CD8-positive, alpha-beta T cell (primary cell): ENCODE measurements at regions of chr9 and their contacts with region 1.

Region 1: GRCh38 chr9:120755827-120756434 is 37.3 kb downstream of the FBXW2 start:
- DNase-seq: peak; percentile 46 to 82 (median 70)
- ATAC-seq: peak; percentile 79
- H3K4me3 ChIP-seq: no peak overlapping the region
- H3K4me3 Mint-ChIP-seq: no peak overlapping the region
- H3K27ac ChIP-seq: no peak overlapping the region
- H3K27ac Mint-ChIP-seq: no peak overlapping the region
- H3K4me1 ChIP-seq: no peaks in the 10 kb centered on the region
- H3K4me1 Mint-ChIP-seq: no peaks in the 10 kb centered on the region
- H3K27me3 ChIP-seq: no peaks in the 10 kb centered on the region
- H3K27me3 Mint-ChIP-seq: no peaks in the 10 kb centered on the region
- CTCF ChIP-seq: peak; percentile 93

Region 2: DNA sequence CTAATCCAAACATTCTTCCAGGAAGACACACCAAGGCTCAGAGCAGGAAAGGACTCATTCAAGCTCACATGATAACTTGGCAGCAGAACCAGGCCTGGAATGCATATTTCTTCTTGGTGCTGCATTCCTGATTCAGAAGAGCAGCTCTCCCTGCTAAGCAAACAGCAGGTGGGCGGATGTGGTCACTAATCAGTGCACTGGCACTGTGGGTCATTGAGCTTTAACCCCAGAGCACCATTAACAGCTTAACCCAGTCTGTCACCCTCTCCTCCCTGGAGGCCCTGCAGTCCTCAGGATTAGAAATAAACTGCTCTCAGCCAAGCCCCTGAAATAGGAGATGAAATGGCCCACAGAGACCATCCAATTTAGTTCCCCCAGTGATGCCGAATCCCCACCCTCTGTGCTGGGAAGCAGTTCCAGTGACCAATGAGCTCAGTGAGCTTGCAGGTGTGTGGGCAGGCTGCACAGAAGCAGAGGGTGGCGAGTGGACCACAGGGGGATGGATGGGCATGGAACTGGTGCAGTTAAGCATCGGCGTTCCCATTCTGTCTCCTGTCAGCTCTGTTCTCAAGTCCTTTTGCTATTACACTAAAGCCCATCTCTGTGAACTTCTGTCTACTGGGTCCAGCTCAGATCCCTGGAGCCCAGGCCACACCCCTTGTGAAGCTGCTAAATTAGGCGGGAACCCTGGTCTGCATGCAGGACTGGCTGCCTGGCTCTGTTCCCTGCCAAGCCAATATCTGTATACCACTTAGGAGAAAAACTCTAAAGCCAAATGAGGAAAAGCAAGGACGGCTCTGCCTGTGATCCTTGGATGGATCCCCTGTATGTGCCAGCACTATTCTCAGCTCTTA is 25.0 kb before region 1 on chr9:
- CTCF ChIA-PET with region 1: interaction called, 10 read pairs
- POLR2A ChIA-PET with region 1: no interaction called
- intact Hi-C with region 1: no loop called
- DNase-seq: no peak
- ATAC-seq: no peak
- H3K4me3 ChIP-seq: no peak overlapping the region
- H3K4me3 Mint-ChIP-seq: no peak overlapping the region
- H3K27ac ChIP-seq: no peak overlapping the region
- H3K27ac Mint-ChIP-seq: no peak overlapping the region
- H3K4me1 ChIP-seq: no peaks in the 10 kb centered on the region
- H3K4me1 Mint-ChIP-seq: peaks cover 3% of the 10 kb centered on the region
- H3K27me3 ChIP-seq: peaks cover 0 to 3% of the 10 kb centered on the region in 2 experiments
- H3K27me3 Mint-ChIP-seq: no peaks in the 10 kb centered on the region
- CTCF ChIP-seq: no peak

Region 3: GRCh38 chr9:120936011-120936763 is 180.3 kb after region 1 on chr9:
- CTCF ChIA-PET with region 1: interaction called, 10 read pairs
- POLR2A ChIA-PET with region 1: no interaction called
- intact Hi-C with region 1: loop called (anchors 1 to 2 kb)
- DNase-seq: peak; percentile 69 to 94 (median 88)
- ATAC-seq: peak; percentile 65
- H3K4me3 ChIP-seq: no peak overlapping the region
- H3K4me3 Mint-ChIP-seq: peak overlapping the region; percentile 30
- H3K27ac ChIP-seq: peak overlapping the region; percentile 52 to 95
- H3K27ac Mint-ChIP-seq: peak overlapping the region; percentile 90
- H3K4me1 ChIP-seq: peaks cover 61% of the 10 kb centered on the region
- H3K4me1 Mint-ChIP-seq: peaks cover 60% of the 10 kb centered on the region
- H3K27me3 ChIP-seq: no peaks in the 10 kb centered on the region
- H3K27me3 Mint-ChIP-seq: no peaks in the 10 kb centered on the region
- CTCF ChIP-seq: peak; percentile 84

Region 4: DNA sequence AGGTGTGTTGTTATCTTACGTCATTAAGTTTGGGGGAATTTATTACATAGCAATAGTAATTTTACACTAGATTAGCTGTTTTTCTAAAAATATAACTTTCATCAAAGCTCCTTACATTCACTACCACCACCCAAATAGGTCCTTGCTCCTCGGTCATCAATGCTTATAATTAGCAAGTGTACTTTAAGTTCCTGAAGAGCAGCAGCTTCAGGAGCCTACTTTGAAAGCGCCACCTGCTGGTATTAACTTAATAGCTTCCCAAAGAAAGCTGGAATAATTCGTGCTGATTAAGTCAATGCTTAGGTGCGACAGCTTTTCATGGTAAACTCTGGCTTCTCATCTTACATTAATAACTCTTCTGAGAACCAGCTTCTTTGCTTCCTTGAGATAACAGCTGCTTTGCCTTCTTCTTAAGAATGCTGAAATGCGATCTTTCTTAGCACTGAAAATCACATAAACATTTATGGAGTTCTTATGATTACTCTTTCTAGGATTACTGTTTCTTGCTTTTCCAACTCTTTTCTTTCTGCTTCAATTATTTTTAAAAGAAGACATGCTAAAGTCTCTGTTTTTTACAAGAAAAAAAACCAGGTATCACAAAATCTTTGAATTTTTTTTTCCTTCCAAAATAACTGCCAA is 304.2 kb after region 1 on chr9:
- CTCF ChIA-PET with region 1: interaction called, 176 read pairs
- POLR2A ChIA-PET with region 1: interaction called, 3 read pairs
- intact Hi-C with region 1: loop called (anchors 1 kb)
- DNase-seq: peak in 5 of 9 experiments; percentile 5 to 74 (median 37)
- ATAC-seq: peak; percentile 26
- H3K4me3 ChIP-seq: no peak overlapping the region
- H3K4me3 Mint-ChIP-seq: no peak overlapping the region
- H3K27ac ChIP-seq: no peak overlapping the region
- H3K27ac Mint-ChIP-seq: no peak overlapping the region
- H3K4me1 ChIP-seq: no peaks in the 10 kb centered on the region
- H3K4me1 Mint-ChIP-seq: peaks cover 13% of the 10 kb centered on the region
- H3K27me3 ChIP-seq: no peaks in the 10 kb centered on the region
- H3K27me3 Mint-ChIP-seq: no peaks in the 10 kb centered on the region
- CTCF ChIP-seq: peak; percentile 73

Region 5: GRCh38 chr9:121156263-121156731 is 400.4 kb after region 1 on chr9:
- CTCF ChIA-PET with region 1: no interaction called
- POLR2A ChIA-PET with region 1: no interaction called
- intact Hi-C with region 1: loop called in 1 of 2 experiments (anchors 1 kb)
- DNase-seq: peak in 3 of 9 experiments; percentile 20 to 65 (median 38)
- ATAC-seq: peak; percentile 80
- H3K4me3 ChIP-seq: no peak overlapping the region
- H3K4me3 Mint-ChIP-seq: no peak overlapping the region
- H3K27ac ChIP-seq: peak overlapping the region in 1 of 2 experiments; percentile 54
- H3K27ac Mint-ChIP-seq: peak overlapping the region; percentile 85
- H3K4me1 ChIP-seq: peaks cover 9% of the 10 kb centered on the region
- H3K4me1 Mint-ChIP-seq: peaks cover 36% of the 10 kb centered on the region
- H3K27me3 ChIP-seq: no peaks in the 10 kb centered on the region
- H3K27me3 Mint-ChIP-seq: no peaks in the 10 kb centered on the region
- CTCF ChIP-seq: no peak

Region 6: GRCh38 chr9:121399883-121400607 is 644.1 kb after region 1 on chr9:
- CTCF ChIA-PET with region 1: no interaction called
- POLR2A ChIA-PET with region 1: no interaction called
- intact Hi-C with region 1: loop called (anchors 1 to 5 kb)
- DNase-seq: peak in 3 of 9 experiments; percentile 8 to 80 (median 72)
- ATAC-seq: peak; percentile 42
- H3K4me3 ChIP-seq: no peak overlapping the region
- H3K4me3 Mint-ChIP-seq: no peak overlapping the region
- H3K27ac ChIP-seq: no peak overlapping the region
- H3K27ac Mint-ChIP-seq: no peak overlapping the region
- H3K4me1 ChIP-seq: no peaks in the 10 kb centered on the region
- H3K4me1 Mint-ChIP-seq: no peaks in the 10 kb centered on the region
- H3K27me3 ChIP-seq: no peaks in the 10 kb centered on the region
- H3K27me3 Mint-ChIP-seq: peaks cover 3% of the 10 kb centered on the region
- CTCF ChIP-seq: peak; percentile 92